ENCODE measurements at regions of chr3 and their contacts with region 1.

Region 1: GRCh38 chr3:136861890-136862616 is at the start of gene NCK1:
- DNase-seq: peak; percentile 99
- H3K4me3 Mint-ChIP-seq: peak within 1 kb of the TSS; percentile 97
- H3K27ac Mint-ChIP-seq: peak within 1 kb of the TSS; percentile 98
- H3K4me1 Mint-ChIP-seq: peaks cover 55% of the 10 kb centered on the region
- H3K27me3 Mint-ChIP-seq: no peaks in the 10 kb centered on the region
- total RNA-seq, gene NCK1: 50.8 to 51.3 TPM

Region 2: GRCh38 chr3:136196401-136197158 is 665.5 kb before region 1 on chr3:
- CTCF ChIA-PET with region 1: no interaction called
- POLR2A ChIA-PET with region 1: interaction called, 48 read pairs
- DNase-seq: peak; percentile 99
- H3K4me3 Mint-ChIP-seq: peak overlapping the region; percentile 98
- H3K27ac Mint-ChIP-seq: peak overlapping the region; percentile 97
- H3K4me1 Mint-ChIP-seq: peaks cover 32% of the 10 kb centered on the region
- H3K27me3 Mint-ChIP-seq: peaks cover 2% of the 10 kb centered on the region

Region 3: GRCh38 chr3:136490646-136491405 is 371.2 kb before region 1 on chr3:
- CTCF ChIA-PET with region 1: no interaction called
- POLR2A ChIA-PET with region 1: no interaction called
- DNase-seq: no peak
- H3K4me3 Mint-ChIP-seq: no peak overlapping the region
- H3K27ac Mint-ChIP-seq: no peak overlapping the region
- H3K4me1 Mint-ChIP-seq: peaks cover 2% of the 10 kb centered on the region
- H3K27me3 Mint-ChIP-seq: no peaks in the 10 kb centered on the region

Region 4: DNA sequence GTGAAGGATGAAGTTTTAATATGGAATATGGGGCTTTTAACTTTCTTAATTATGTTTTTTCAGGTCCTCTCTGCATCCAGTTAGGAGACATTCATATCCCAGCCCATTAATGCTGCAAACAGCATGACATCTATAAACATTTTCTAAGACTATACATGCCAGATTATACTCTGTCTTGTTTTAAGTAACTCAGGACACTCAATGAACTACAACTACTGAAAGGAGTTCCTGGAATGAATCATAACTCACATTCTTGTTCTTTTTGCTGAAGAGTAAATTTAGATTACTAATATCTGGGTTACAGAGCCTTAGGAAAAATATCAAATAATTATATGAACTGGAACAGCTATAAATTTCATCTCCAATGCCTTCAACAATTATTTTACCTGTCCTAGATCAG is 277.3 kb before region 1 on chr3:
- CTCF ChIA-PET with region 1: no interaction called
- POLR2A ChIA-PET with region 1: no interaction called
- DNase-seq: no peak
- H3K4me3 Mint-ChIP-seq: no peak overlapping the region
- H3K27ac Mint-ChIP-seq: no peak overlapping the region
- H3K4me1 Mint-ChIP-seq: peaks cover 5% of the 10 kb centered on the region
- H3K27me3 Mint-ChIP-seq: no peaks in the 10 kb centered on the region

Region 5: DNA sequence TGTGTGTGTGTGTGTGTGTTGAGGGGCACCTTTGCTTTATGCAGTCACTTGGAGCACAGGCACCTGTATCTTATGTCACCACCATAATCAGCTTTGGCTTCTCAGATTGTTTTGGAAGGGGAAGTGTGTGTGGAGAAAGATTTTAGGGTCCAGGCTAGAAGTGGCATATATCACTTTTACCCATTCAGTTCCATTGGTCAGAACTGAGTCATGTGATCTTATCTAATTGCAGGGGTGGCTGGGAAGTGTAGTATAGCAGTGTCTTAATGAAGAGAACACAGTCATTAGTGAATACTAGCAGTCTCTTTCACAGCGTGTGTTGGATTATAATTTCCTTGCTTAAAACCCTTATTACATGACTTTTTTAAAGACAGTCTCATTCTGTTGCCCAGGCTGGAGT is 20.5 kb after region 1 on chr3:
- CTCF ChIA-PET with region 1: interaction called, 5 read pairs
- POLR2A ChIA-PET with region 1: interaction called, 42 read pairs
- DNase-seq: no peak
- H3K4me3 Mint-ChIP-seq: no peak overlapping the region
- H3K27ac Mint-ChIP-seq: no peak overlapping the region
- H3K4me1 Mint-ChIP-seq: peaks cover 51% of the 10 kb centered on the region
- H3K27me3 Mint-ChIP-seq: no peaks in the 10 kb centered on the region

Region 6: GRCh38 chr3:136909187-136909586 is 47.1 kb after region 1 on chr3:
- CTCF ChIA-PET with region 1: no interaction called
- POLR2A ChIA-PET with region 1: interaction called, 14 read pairs
- DNase-seq: no peak
- H3K4me3 Mint-ChIP-seq: no peak overlapping the region
- H3K27ac Mint-ChIP-seq: no peak overlapping the region
- H3K4me1 Mint-ChIP-seq: peaks cover 47% of the 10 kb centered on the region
- H3K27me3 Mint-ChIP-seq: no peaks in the 10 kb centered on the region

Region 7: GRCh38 chr3:137013955-137014688 is 152.1 kb after region 1 on chr3:
- CTCF ChIA-PET with region 1: interaction called, 27 read pairs
- POLR2A ChIA-PET with region 1: interaction called, 25 read pairs
- DNase-seq: peak; percentile 83
- H3K4me3 Mint-ChIP-seq: peak overlapping the region; percentile 61
- H3K27ac Mint-ChIP-seq: no peak overlapping the region
- H3K4me1 Mint-ChIP-seq: peaks cover 14% of the 10 kb centered on the region
- H3K27me3 Mint-ChIP-seq: peaks cover 2% of the 10 kb centered on the region

Measured in activated CD4-positive, alpha-beta memory T cell treated with anti-CD3 and anti-CD28 coated beads, Interleukin-2, amount 10 ng/mL, durations not matched to agents 7 days and 5 days (primary cell).